ENCODE measurements at regions of chr3 and their contacts with region 1.

Region 1: GRCh38 chr3:45647148-45647619 is 42.0 kb upstream of the SACM1L start:
- DNase-seq: no peak
- ATAC-seq: peak; percentile 94 to 96
- H3K4me3 ChIP-seq: no peak overlapping the region
- H3K27ac ChIP-seq: peak overlapping the region; percentile 74 to 80 (median 77)
- H3K4me1 ChIP-seq: peaks cover 35 to 53% of the 10 kb centered on the region in 2 donors
- H3K27me3 ChIP-seq: no peaks in the 10 kb centered on the region
- CTCF ChIP-seq: no peak
- POLR2A ChIP-seq: no peak

Region 2: GRCh38 chr3:44913868-44914468 is 733.2 kb before region 1 on chr3:
- in situ Hi-C with region 1: no loop called
- intact Hi-C with region 1: no loop called
- DNase-seq: peak; percentile 17 to 33
- ATAC-seq: peak; percentile 47 to 66
- H3K4me3 ChIP-seq: no peak overlapping the region
- H3K27ac ChIP-seq: no peak overlapping the region
- H3K4me1 ChIP-seq: no peaks in the 10 kb centered on the region
- H3K27me3 ChIP-seq: peaks cover 0 to 5% (median 0%) of the 10 kb centered on the region in 3 donors
- CTCF ChIP-seq: peak; percentile 37 to 73 (median 64)
- POLR2A ChIP-seq: no peak

Region 3: DNA sequence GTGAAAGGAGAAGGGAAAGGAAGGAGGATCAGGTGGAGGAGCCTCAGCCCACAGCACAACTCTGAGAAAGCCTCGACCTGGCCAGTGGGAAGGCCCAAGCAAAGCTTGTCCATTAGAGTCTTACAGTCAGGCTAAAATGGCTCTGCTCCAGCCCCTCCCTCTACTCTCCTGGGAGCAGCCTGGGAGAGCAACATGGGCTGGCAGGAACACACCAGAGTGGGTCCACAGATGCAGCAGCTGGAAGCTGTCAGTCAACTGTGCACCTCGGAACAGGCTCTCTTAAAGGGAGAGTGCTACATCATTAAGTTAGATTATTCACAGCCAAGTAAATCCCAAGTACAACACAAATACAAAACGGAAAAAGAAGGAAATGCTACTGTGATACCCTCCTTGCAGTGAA is 150.6 kb before region 1 on chr3:
- in situ Hi-C with region 1: no loop called
- intact Hi-C with region 1: no loop called
- DNase-seq: peak; percentile 80 to 93
- ATAC-seq: peak; percentile 88 to 92
- H3K4me3 ChIP-seq: no peak overlapping the region
- H3K27ac ChIP-seq: peak overlapping the region; percentile 58 to 82 (median 78)
- H3K4me1 ChIP-seq: peaks cover 31% of the 10 kb centered on the region in 2 donors
- H3K27me3 ChIP-seq: no peaks in the 10 kb centered on the region
- CTCF ChIP-seq: no peak
- POLR2A ChIP-seq: no peak

Region 4: DNA sequence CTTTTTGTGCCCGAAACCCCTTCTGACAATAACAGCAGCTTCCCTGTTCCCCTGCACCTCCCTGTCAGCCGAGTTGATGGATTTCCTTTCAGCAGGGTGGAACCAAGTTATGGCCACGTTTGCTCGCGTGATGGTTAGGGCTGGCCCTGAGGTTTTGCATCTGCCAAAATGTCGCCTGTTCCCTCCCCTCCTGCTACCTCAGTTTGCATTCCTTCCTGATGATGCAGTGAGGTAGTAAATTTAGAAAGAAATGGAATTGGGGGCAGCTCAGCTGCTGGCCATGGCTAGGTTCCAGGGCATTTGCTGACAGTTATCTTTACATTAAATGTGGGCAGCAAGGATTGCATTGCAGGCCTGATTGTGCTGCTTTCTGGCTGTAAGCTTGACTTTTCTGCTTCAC is 39.4 kb before region 1 on chr3:
- in situ Hi-C with region 1: loop called in 1 of 4 experiments (anchors 5 kb)
- intact Hi-C with region 1: loop called (anchors 2 kb)
- DNase-seq: no peak
- ATAC-seq: peak in 1 of 2 donors; percentile 23
- H3K4me3 ChIP-seq: peak overlapping the region in 1 of 4 donors; percentile 6
- H3K27ac ChIP-seq: peak overlapping the region; percentile 75 to 86 (median 81)
- H3K4me1 ChIP-seq: peaks cover 90 to 96% of the 10 kb centered on the region in 2 donors
- H3K27me3 ChIP-seq: no peaks in the 10 kb centered on the region
- CTCF ChIP-seq: no peak
- POLR2A ChIP-seq: no peak

Measured in gastrocnemius medialis (tissue), 4 donors.